ENCODE measurements at regions of chr4 and their contacts with region 1.

Region 1: GRCh38 chr4:8241895-8242696 is 27.5 kb upstream of the HTRA3 start:
- DNase-seq: peak; percentile 96
- H3K4me3 ChIP-seq: no peak overlapping the region
- H3K27ac ChIP-seq: peak overlapping the region in 3 of 4 donors; percentile 2 to 49 (median 43)
- H3K4me1 ChIP-seq: peaks cover 0 to 12% (median 11%) of the 10 kb centered on the region in 4 donors
- H3K27me3 ChIP-seq: no peaks in the 10 kb centered on the region
- CTCF ChIP-seq: peak; percentile 90 to 99 (median 92)
- EP300 ChIP-seq: no peak
- POLR2A ChIP-seq: no peak

Region 2: GRCh38 chr4:8362483-8362882 is 120.4 kb after region 1 on chr4:
- intact Hi-C with region 1: no loop called
- DNase-seq: peak; percentile 25
- H3K4me3 ChIP-seq: no peak overlapping the region
- H3K27ac ChIP-seq: no peak overlapping the region
- H3K4me1 ChIP-seq: peaks cover 0 to 10% (median 3%) of the 10 kb centered on the region in 4 donors
- H3K27me3 ChIP-seq: no peaks in the 10 kb centered on the region
- CTCF ChIP-seq: no peak
- EP300 ChIP-seq: no peak
- POLR2A ChIP-seq: no peak

Region 3: DNA sequence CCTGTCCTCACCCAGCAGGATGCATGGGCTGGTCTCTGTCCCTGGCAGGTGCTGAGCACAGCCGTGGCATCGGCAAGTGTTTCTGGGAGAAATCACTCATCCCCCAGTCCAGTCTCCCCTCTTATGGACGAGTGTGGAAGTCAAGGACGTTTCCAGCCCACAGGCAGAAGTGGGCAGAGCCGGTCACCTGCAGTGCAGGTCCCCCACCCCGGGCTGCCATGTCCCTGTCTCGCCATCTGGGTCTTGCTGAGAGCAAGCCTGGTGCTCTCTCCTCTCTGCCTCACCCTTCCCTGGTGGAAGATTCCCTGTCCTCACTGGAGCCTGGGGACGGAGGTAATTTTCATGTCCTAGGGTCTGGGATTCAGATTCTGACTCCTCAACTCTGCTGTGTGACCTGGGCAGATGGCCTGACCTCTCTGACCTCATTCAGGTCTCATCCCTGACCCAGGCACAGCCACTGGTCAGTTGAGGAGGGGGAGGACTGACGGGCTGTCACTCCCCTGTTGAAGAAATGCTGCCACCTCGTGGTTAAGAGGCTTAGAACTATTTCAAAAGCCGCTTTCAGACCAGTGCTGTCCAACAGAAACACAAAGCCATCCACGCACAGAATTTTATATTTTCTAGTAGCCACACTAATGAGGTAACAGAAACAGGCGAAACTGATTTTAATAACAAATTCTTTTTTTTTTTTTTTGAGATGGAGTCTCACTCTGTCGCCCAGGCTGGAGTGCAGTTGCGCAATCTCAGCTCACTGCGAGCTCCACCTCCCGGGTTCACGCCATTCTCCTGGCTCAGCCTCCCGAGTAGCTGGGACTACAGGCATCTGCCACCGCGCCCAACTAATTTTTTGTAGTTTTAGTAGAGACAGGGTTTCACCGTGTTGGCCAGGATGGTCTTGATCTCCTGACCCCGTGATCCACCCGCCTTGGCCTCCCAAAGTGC is 352.3 kb after region 1 on chr4:
- intact Hi-C with region 1: loop called (anchors 5 kb)
- DNase-seq: no peak
- H3K4me3 ChIP-seq: no peak overlapping the region
- H3K27ac ChIP-seq: no peak overlapping the region
- H3K4me1 ChIP-seq: peaks cover 0 to 23% (median 22%) of the 10 kb centered on the region in 4 donors
- H3K27me3 ChIP-seq: peaks cover 13 to 41% (median 32%) of the 10 kb centered on the region in 3 donors
- CTCF ChIP-seq: peak; percentile 44 to 61 (median 58)
- EP300 ChIP-seq: no peak
- POLR2A ChIP-seq: no peak

Measured in sigmoid colon (tissue), 7 donors.